CD4-positive, alpha-beta memory T cell (primary cell): ENCODE measurements at regions of chr13 and their contacts with region 1.

Region 1: GRCh38 chr13:46295491-46296114 is 83.9 kb downstream of the LRRC63 start:
- DNase-seq: peak; percentile 85 to 91 (median 86)
- H3K4me3 ChIP-seq: peak overlapping the region in 1 of 2 donors; percentile 26
- H3K4me3 Mint-ChIP-seq: peak overlapping the region; percentile 43 to 85 (median 75)
- H3K27ac ChIP-seq: peak overlapping the region; percentile 57
- H3K27ac Mint-ChIP-seq: peak overlapping the region; percentile 87 to 99 (median 96)
- H3K4me1 ChIP-seq: peaks cover 45% of the 10 kb centered on the region
- H3K4me1 Mint-ChIP-seq: peaks cover 38 to 65% (median 50%) of the 10 kb centered on the region in 4 donors
- H3K27me3 ChIP-seq: no peaks in the 10 kb centered on the region
- H3K27me3 Mint-ChIP-seq: no peaks in the 10 kb centered on the region

Region 2: GRCh38 chr13:46052319-46053161 is 243.1 kb before region 1 on chr13 and contains the start of gene ZC3H13:
- CTCF ChIA-PET with region 1: interaction called, 4 read pairs
- POLR2A ChIA-PET with region 1: no interaction called
- intact Hi-C with region 1: loop called (anchors 2 kb)
- DNase-seq: peak; percentile 91 to 97 (median 93)
- H3K4me3 ChIP-seq: peak within 1 kb of the TSS; percentile 59 to 88
- H3K4me3 Mint-ChIP-seq: peak within 1 kb of the TSS; percentile 88 to 99 (median 95)
- H3K27ac ChIP-seq: peak within 1 kb of the TSS; percentile 95
- H3K27ac Mint-ChIP-seq: peak within 1 kb of the TSS; percentile 93 to 99 (median 98)
- H3K4me1 ChIP-seq: peaks cover 38% of the 10 kb centered on the region
- H3K4me1 Mint-ChIP-seq: peaks cover 28 to 49% (median 37%) of the 10 kb centered on the region in 4 donors
- H3K27me3 ChIP-seq: peaks cover 4% of the 10 kb centered on the region
- H3K27me3 Mint-ChIP-seq: peaks cover 7 to 14% of the 10 kb centered on the region in 2 donors
- total RNA-seq, gene ZC3H13: 55.1 to 65.5 TPM

Region 3: GRCh38 chr13:46160471-46161066 is 135.0 kb before region 1 on chr13:
- CTCF ChIA-PET with region 1: interaction called, 46 read pairs
- POLR2A ChIA-PET with region 1: interaction called, 13 read pairs
- intact Hi-C with region 1: no loop called
- DNase-seq: peak; percentile 54 to 77 (median 73)
- H3K4me3 ChIP-seq: peak overlapping the region; percentile 2 to 23
- H3K4me3 Mint-ChIP-seq: peak overlapping the region; percentile 12 to 87 (median 82)
- H3K27ac ChIP-seq: peak overlapping the region; percentile 73
- H3K27ac Mint-ChIP-seq: peak overlapping the region; percentile 84 to 96 (median 94)
- H3K4me1 ChIP-seq: peaks cover 54% of the 10 kb centered on the region
- H3K4me1 Mint-ChIP-seq: peaks cover 44 to 59% (median 51%) of the 10 kb centered on the region in 4 donors
- H3K27me3 ChIP-seq: no peaks in the 10 kb centered on the region
- H3K27me3 Mint-ChIP-seq: no peaks in the 10 kb centered on the region

Region 4: GRCh38 chr13:46168341-46168740 is 127.3 kb before region 1 on chr13:
- CTCF ChIA-PET with region 1: interaction called, 46 read pairs
- POLR2A ChIA-PET with region 1: interaction called, 37 read pairs
- intact Hi-C with region 1: no loop called
- DNase-seq: peak in 1 of 5 donors; percentile 81
- H3K4me3 ChIP-seq: peak overlapping the region; percentile 9 to 38
- H3K4me3 Mint-ChIP-seq: peak overlapping the region; percentile 62 to 92 (median 84)
- H3K27ac ChIP-seq: peak overlapping the region; percentile 74
- H3K27ac Mint-ChIP-seq: peak overlapping the region; percentile 85 to 99 (median 95)
- H3K4me1 ChIP-seq: peaks cover 99% of the 10 kb centered on the region
- H3K4me1 Mint-ChIP-seq: peaks cover 72 to 96% (median 85%) of the 10 kb centered on the region in 4 donors
- H3K27me3 ChIP-seq: no peaks in the 10 kb centered on the region
- H3K27me3 Mint-ChIP-seq: no peaks in the 10 kb centered on the region

Region 5: DNA sequence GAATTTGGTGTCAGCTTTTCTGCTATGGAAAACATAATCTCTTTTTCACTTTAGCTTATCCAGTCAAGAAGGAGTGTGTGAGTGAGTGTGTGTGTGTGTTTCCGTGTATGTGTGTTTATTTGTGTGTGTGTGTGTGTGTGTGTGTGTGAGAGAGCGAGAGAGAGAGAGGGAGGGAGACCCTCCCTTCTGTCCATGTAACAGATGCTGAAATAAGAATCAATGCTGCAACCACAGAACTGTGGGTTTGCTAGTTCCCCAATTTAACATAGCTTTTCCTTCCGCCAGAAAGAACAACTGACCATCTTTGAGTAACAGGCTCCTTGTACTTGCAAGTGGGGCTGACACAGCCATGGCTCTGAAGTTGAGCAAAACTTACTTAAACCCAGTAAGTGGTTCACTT is 118.8 kb before region 1 on chr13:
- CTCF ChIA-PET with region 1: interaction called, 8 read pairs
- POLR2A ChIA-PET with region 1: interaction called, 51 read pairs
- intact Hi-C with region 1: no loop called
- DNase-seq: peak in 2 of 5 donors; percentile 29 to 50
- H3K4me3 ChIP-seq: peak overlapping the region; percentile 14 to 94
- H3K4me3 Mint-ChIP-seq: peak overlapping the region; percentile 75 to 98 (median 87)
- H3K27ac ChIP-seq: peak overlapping the region; percentile 74
- H3K27ac Mint-ChIP-seq: peak overlapping the region; percentile 89 to 99 (median 90)
- H3K4me1 ChIP-seq: peaks cover 76% of the 10 kb centered on the region
- H3K4me1 Mint-ChIP-seq: peaks cover 50 to 85% (median 59%) of the 10 kb centered on the region in 4 donors
- H3K27me3 ChIP-seq: no peaks in the 10 kb centered on the region
- H3K27me3 Mint-ChIP-seq: no peaks in the 10 kb centered on the region

Region 6: GRCh38 chr13:46211483-46212351 is 83.9 kb before region 1 on chr13 and contains the start of gene LRRC63:
- CTCF ChIA-PET with region 1: interaction called, 7 read pairs
- POLR2A ChIA-PET with region 1: interaction called, 20 read pairs
- intact Hi-C with region 1: loop called (anchors 2 kb)
- DNase-seq: peak; percentile 80 to 85 (median 84)
- H3K4me3 ChIP-seq: peak within 1 kb of the TSS; percentile 49 to 56
- H3K4me3 Mint-ChIP-seq: peak within 1 kb of the TSS; percentile 85 to 97 (median 94)
- H3K27ac ChIP-seq: peak within 1 kb of the TSS; percentile 75
- H3K27ac Mint-ChIP-seq: peak within 1 kb of the TSS; percentile 83 to 97 (median 96)
- H3K4me1 ChIP-seq: peaks cover 18% of the 10 kb centered on the region
- H3K4me1 Mint-ChIP-seq: peaks cover 9 to 30% (median 18%) of the 10 kb centered on the region in 4 donors
- H3K27me3 ChIP-seq: no peaks in the 10 kb centered on the region
- H3K27me3 Mint-ChIP-seq: no peaks in the 10 kb centered on the region
- total RNA-seq, gene LRRC63: 0.49 to 0.75 TPM

Region 7: GRCh38 chr13:46313432-46314257 is 18.0 kb after region 1 on chr13:
- CTCF ChIA-PET with region 1: interaction called, 166 read pairs
- POLR2A ChIA-PET with region 1: interaction called, 19 read pairs
- intact Hi-C with region 1: no loop called
- DNase-seq: peak in 1 of 5 donors; percentile 9
- H3K4me3 ChIP-seq: no peak overlapping the region
- H3K4me3 Mint-ChIP-seq: peak overlapping the region; percentile 12 to 83 (median 74)
- H3K27ac ChIP-seq: no peak overlapping the region
- H3K27ac Mint-ChIP-seq: peak overlapping the region; percentile 9 to 92 (median 83)
- H3K4me1 ChIP-seq: peaks cover 11% of the 10 kb centered on the region
- H3K4me1 Mint-ChIP-seq: peaks cover 6 to 19% (median 8%) of the 10 kb centered on the region in 4 donors
- H3K27me3 ChIP-seq: no peaks in the 10 kb centered on the region
- H3K27me3 Mint-ChIP-seq: peaks cover 0 to 4% of the 10 kb centered on the region in 2 donors

Region 8: GRCh38 chr13:46339035-46339666 is 43.5 kb after region 1 on chr13:
- CTCF ChIA-PET with region 1: no interaction called
- POLR2A ChIA-PET with region 1: no interaction called
- intact Hi-C with region 1: no loop called
- DNase-seq: no peak
- H3K4me3 ChIP-seq: no peak overlapping the region
- H3K4me3 Mint-ChIP-seq: no peak overlapping the region
- H3K27ac ChIP-seq: no peak overlapping the region
- H3K27ac Mint-ChIP-seq: no peak overlapping the region
- H3K4me1 ChIP-seq: peaks cover 9% of the 10 kb centered on the region
- H3K4me1 Mint-ChIP-seq: peaks cover 7 to 15% (median 11%) of the 10 kb centered on the region in 4 donors
- H3K27me3 ChIP-seq: no peaks in the 10 kb centered on the region
- H3K27me3 Mint-ChIP-seq: peaks cover 0 to 2% of the 10 kb centered on the region in 2 donors

Region 9: GRCh38 chr13:46369506-46370277 is 74.1 kb after region 1 on chr13:
- CTCF ChIA-PET with region 1: no interaction called
- POLR2A ChIA-PET with region 1: no interaction called
- intact Hi-C with region 1: no loop called
- DNase-seq: no peak
- H3K4me3 ChIP-seq: no peak overlapping the region
- H3K4me3 Mint-ChIP-seq: no peak overlapping the region
- H3K27ac ChIP-seq: no peak overlapping the region
- H3K27ac Mint-ChIP-seq: no peak overlapping the region
- H3K4me1 ChIP-seq: no peaks in the 10 kb centered on the region
- H3K4me1 Mint-ChIP-seq: no peaks in the 10 kb centered on the region
- H3K27me3 ChIP-seq: no peaks in the 10 kb centered on the region
- H3K27me3 Mint-ChIP-seq: peaks cover 5 to 7% of the 10 kb centered on the region in 2 donors